Heart right ventricle (tissue), 16 donors: ENCODE measurements at regions of chr16 and their contacts with region 1.

Region 1: DNA sequence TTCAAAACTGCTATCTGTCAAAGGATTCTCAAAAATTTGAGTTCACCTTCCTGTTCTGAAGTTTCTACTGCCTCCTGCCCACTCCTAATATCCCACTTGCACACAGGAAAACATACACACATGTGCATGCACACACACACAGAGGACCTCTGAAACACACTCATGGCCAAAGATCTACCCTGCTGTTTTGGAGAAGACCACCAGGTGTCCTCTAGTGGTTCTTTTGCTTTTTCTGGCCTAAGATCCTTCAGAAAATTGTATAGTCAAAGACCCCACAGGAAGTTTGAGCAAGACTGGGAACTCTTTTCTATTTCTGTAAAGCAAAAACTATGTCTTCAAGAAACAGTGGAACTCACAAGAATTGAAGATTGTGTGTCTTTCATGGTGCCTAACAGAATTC is 90.2 kb downstream of the CDH8 start:
- DNase-seq: no peak
- ATAC-seq: no peak
- H3K4me3 ChIP-seq: no peak overlapping the region
- H3K27ac ChIP-seq: no peak overlapping the region
- H3K4me1 ChIP-seq: no peaks in the 10 kb centered on the region
- H3K27me3 ChIP-seq: no peaks in the 10 kb centered on the region
- CTCF ChIP-seq: no peak

Region 2: GRCh38 chr16:60206516-60206915 is 1739.5 kb before region 1 on chr16:
- intact Hi-C with region 1: loop called in 1 of 10 experiments (anchors 5 kb)
- DNase-seq: no peak
- ATAC-seq: no peak
- H3K4me3 ChIP-seq: no peak overlapping the region
- H3K27ac ChIP-seq: no peak overlapping the region
- H3K4me1 ChIP-seq: peaks cover 0 to 6% (median 0%) of the 10 kb centered on the region in 9 donors
- H3K27me3 ChIP-seq: no peaks in the 10 kb centered on the region
- CTCF ChIP-seq: no peak

Region 3: GRCh38 chr16:62014319-62014933 is 68.4 kb after region 1 on chr16:
- intact Hi-C with region 1: loop called in 1 of 10 experiments (anchors 10 kb)
- DNase-seq: no peak
- ATAC-seq: peak in 3 of 8 donors; percentile 65 to 83 (median 69)
- H3K4me3 ChIP-seq: no peak overlapping the region
- H3K27ac ChIP-seq: peak overlapping the region in 1 of 10 donors; percentile 24
- H3K4me1 ChIP-seq: peaks cover 0 to 9% (median 0%) of the 10 kb centered on the region in 9 donors
- H3K27me3 ChIP-seq: no peaks in the 10 kb centered on the region
- CTCF ChIP-seq: no peak